ENCODE measurements at regions of chr19 and their contacts with region 1.

Region 1: DNA sequence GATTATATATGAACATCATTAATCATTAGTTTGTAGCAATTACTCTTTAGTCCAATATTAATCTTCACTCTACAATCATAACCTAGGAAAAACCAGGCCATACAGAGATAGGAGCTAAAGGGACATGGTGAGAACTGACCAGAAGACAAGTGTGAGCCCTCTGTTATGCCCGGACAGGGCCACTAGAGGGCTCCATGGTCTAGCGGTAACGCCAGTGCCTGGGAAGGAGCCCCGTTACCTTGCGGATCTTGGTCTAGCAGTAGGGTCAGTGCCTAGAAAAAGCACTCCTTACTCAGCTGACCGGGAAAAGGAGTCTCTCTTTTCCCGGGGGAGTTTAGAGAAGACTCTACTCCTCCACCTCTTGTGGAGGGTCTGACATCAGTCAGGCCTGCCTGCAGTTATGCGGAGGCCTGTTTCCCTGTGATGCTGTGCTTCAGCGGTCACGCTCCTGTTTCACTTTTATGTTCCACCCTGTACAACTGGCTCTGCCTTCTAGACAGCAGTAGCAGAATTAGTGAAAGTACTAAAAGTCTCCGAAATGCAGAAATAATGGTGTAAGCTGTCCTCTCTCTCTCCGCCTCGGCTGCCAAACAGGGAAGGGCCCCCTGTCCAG is 13.8 kb downstream of the OR7D4 start:
- DNase-seq: peak; percentile 56 to 81 (median 74)
- H3K4me3 ChIP-seq: peak overlapping the region; percentile 26
- H3K27ac ChIP-seq: no peak overlapping the region
- H3K4me1 ChIP-seq: no peaks in the 10 kb centered on the region
- H3K27me3 ChIP-seq: no peaks in the 10 kb centered on the region
- CTCF ChIP-seq: peak; percentile 50 to 66 (median 50)
- EP300 ChIP-seq: no peak
- POLR2A ChIP-seq: no peak

Region 2: GRCh38 chr19:8922591-8922990 is 283.0 kb before region 1 on chr19:
- intact Hi-C with region 1: no loop called
- DNase-seq: no peak
- H3K4me3 ChIP-seq: no peak overlapping the region
- H3K27ac ChIP-seq: no peak overlapping the region
- H3K4me1 ChIP-seq: no peaks in the 10 kb centered on the region
- H3K27me3 ChIP-seq: no peaks in the 10 kb centered on the region
- CTCF ChIP-seq: no peak
- EP300 ChIP-seq: no peak
- POLR2A ChIP-seq: no peak

Region 3: DNA sequence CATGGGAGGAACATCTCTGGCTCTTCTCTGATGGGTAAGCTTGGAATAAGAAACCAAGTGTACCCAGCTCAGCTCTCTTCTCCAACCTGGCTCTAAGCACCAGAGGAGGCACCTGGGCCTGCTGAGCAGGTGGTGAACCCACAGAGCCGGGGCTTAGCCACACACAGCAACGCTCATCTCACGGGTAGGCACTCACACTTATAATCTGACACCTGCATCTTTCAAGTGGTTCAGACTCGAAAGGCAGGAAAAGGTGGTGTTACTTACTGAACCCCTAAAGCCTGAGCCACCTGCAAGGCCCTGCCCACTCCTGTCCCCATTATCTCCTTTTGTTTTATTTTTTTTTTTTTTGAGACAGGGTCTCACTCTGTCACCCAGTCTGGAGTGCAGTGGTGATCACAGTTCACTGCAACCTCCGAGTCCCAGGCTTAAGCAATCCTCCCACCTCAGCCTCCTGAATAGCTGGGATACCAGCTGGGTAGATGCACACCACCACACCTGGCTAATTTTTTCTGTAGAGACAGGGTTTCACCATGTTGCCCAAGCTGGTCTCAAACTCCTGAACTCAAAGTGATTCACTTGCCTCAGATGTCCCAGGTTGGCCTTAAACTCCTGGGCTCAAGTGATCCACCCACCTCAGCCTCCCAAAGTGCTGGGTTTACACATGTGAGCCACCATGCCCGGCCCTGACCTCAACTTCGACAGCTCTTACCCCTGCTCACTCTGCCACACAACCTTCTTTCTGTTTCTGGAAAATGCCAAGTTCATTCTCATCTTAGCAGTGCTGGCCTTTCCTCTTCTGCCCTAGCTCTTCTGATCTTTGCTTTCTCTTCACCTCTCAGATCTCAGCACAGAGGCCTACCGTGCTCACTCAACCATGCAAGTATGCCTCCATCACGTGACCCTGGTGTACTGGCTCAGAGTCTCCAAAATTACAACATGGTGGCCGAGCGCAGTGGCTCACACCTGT is 603.5 kb after region 1 on chr19:
- intact Hi-C with region 1: loop called in 1 of 4 experiments (anchors 10 kb)
- DNase-seq: no peak
- H3K4me3 ChIP-seq: no peak overlapping the region
- H3K27ac ChIP-seq: no peak overlapping the region
- H3K4me1 ChIP-seq: no peaks in the 10 kb centered on the region
- H3K27me3 ChIP-seq: no peaks in the 10 kb centered on the region
- CTCF ChIP-seq: no peak
- EP300 ChIP-seq: no peak
- POLR2A ChIP-seq: no peak